PC-3 (cell line): ENCODE measurements at regions of chr1 and their contacts with region 1.

Region 1: DNA sequence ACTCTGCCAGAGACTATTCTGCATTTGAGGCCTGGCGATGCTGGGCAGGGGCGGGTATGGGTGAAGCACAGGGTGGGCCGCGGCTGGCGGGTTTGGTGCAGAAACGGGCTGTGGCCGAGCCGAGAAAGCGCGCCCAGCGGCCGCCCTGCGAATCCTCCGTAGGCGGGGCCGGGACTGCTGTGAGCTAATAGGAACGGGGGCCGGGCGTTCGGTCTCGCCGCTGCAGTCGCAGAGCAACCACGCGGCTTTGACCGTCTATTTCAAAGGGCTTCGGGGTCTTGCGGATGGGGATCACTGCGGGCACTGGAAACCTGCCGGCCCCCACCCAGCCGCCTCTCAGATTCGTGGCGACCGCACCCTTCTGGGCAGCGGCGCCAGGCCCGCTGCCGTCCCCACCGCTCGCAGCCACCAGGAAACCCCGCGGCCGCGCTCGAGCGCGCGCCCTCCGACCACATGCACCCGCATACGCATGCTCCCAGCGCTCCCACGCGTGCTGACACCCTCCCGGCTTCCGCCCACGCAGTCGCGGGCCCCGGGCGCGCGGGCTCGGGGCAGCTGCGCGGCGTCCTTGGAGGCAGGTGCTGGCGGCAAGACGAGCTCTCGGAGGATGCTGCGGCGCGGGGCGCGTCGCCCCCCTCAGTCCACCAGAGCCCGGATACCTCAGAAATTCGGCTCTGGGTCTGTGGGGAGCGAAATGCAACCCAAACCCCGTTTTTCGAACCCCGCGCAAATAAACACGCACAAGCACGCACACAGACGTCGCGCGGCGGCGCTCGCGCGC is 32.6 kb downstream of the DNTTIP2 start:
- DNase-seq: peak; percentile 80
- ATAC-seq: peak; percentile 52
- H3K4me3 ChIP-seq: peak overlapping the region; percentile 82
- H3K27ac ChIP-seq: peak overlapping the region; percentile 93
- H3K4me1 ChIP-seq: peaks cover 42% of the 10 kb centered on the region
- H3K27me3 ChIP-seq: no peaks in the 10 kb centered on the region
- CTCF ChIP-seq: peak; percentile 30; the same call in 1 of the 2 replicates

Region 2: GRCh38 chr1:93345633-93346420 is 500.6 kb before region 1 on chr1 and contains the start of gene DR1:
- CTCF ChIA-PET with region 1: no interaction called
- POLR2A ChIA-PET with region 1: interaction called, 3 read pairs
- intact Hi-C with region 1: loop called (anchors 10 kb)
- DNase-seq: peak; percentile 94
- ATAC-seq: peak; percentile 87
- H3K4me3 ChIP-seq: peak within 1 kb of the TSS; percentile 97
- H3K27ac ChIP-seq: peak within 1 kb of the TSS; percentile 91
- H3K4me1 ChIP-seq: peaks cover 12% of the 10 kb centered on the region; the same call in 1 of the 2 replicates
- H3K27me3 ChIP-seq: no peaks in the 10 kb centered on the region
- CTCF ChIP-seq: no peak
- total RNA-seq, gene DR1: 34.8 and 48.6 TPM in 2 replicates

Region 3: GRCh38 chr1:93447516-93448291 is 398.7 kb before region 1 on chr1 and contains the start of gene FNBP1L:
- CTCF ChIA-PET with region 1: no interaction called
- POLR2A ChIA-PET with region 1: interaction called, 18 read pairs
- intact Hi-C with region 1: loop called (anchors 2 kb)
- DNase-seq: peak; percentile 83
- ATAC-seq: peak; percentile 77
- H3K4me3 ChIP-seq: peak within 1 kb of the TSS; percentile 85
- H3K27ac ChIP-seq: peak within 1 kb of the TSS; percentile 29
- H3K4me1 ChIP-seq: peaks cover 26% of the 10 kb centered on the region
- H3K27me3 ChIP-seq: no peaks in the 10 kb centered on the region
- CTCF ChIP-seq: no peak
- total RNA-seq, gene FNBP1L: 27.6 and 28.3 TPM in 2 replicates

Region 4: DNA sequence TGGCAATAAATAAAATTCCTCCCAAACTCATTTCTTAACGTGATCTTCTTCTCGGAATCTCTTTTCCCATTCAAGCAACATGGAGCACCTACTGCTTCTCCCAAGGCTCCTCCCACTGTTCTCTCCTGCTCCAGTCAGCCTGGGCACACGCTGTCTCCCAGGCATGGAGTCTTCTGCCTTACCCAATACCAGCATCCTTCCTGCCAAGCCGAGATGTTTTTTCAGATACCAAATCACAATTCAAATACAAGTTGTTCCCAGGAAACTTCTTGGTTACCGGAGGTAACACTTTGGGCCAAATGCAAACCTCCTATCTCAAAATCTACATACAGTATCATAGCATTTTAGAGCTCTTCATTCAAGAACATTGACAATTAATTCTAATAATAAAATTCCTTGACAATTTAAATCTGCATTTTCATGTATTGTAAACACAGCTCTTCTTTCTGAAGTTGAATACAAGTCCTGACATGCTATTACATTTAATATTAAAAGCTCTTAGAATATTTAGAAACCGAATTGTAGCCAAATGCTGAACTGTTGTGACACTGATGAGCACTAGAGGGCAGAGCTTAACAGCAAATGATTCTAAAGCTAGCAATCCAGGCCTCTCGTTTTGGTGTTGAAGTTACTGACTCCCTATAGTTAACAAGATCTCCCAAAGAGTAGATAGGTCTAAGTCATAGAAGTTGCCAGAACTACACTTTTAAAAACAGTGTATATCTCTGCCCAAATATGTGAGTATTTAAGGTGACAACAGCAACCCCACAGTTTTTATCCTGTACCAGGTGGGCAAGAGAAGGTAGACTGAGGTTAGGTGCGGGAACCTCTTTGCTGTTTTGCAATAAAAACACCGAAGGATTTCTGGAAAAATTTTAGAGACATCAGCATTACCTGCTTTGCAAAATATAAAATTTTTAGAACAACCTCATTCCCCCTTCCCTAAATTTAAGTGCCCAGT is 217.0 kb before region 1 on chr1:
- CTCF ChIA-PET with region 1: interaction called, 6 read pairs
- POLR2A ChIA-PET with region 1: interaction called, 24 read pairs
- intact Hi-C with region 1: loop called (anchors 1 kb)
- DNase-seq: peak; percentile 85
- ATAC-seq: peak; percentile 64
- H3K4me3 ChIP-seq: no peak overlapping the region
- H3K27ac ChIP-seq: peak overlapping the region; percentile 72
- H3K4me1 ChIP-seq: peaks cover 75% of the 10 kb centered on the region
- H3K27me3 ChIP-seq: no peaks in the 10 kb centered on the region
- CTCF ChIP-seq: peak; percentile 88

Region 5: DNA sequence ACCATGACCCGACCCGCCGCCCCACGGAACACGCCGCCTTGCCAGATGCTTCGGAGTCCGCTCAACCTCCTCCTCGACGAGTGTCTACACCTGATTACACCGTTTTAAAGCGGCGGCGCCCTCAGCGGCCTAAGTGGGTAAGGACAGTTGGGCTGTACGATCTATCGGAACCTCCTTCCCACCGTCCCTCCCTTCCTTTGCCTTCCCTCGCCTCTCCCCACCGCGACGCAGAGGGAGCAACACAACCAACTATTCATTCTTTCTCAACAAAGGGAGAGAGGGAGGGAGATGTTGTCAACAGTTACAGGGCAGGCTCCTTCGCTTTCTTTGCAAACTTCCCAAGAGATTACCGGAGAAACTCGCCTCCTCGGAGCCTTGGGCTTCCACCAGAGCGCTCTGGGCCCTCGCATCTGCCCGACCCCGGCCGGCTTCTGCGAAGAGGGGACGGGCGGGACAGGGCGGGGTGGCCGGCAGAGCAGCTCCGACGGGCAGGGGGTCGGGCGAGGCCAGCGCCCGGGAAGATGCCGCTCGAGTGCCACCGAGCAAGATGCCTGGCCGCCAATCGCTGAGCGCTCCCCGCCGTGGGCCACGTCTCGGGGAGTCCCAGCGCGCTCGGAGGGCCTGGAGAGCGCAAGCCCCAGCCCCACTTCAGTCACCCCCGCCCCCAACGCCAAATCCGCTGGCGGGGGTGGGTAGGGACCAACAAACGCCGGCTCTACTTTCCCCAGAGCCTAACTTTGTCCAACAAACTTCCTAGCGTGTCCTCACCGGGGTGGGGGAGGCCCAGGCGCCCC is 165.4 kb before region 1 on chr1:
- CTCF ChIA-PET with region 1: no interaction called
- POLR2A ChIA-PET with region 1: interaction called, 5 read pairs
- intact Hi-C with region 1: loop called (anchors 2 kb)
- DNase-seq: peak; percentile 82
- ATAC-seq: peak; percentile 34
- H3K4me3 ChIP-seq: peak overlapping the region; percentile 95
- H3K27ac ChIP-seq: peak overlapping the region; percentile 99
- H3K4me1 ChIP-seq: peaks cover 78% of the 10 kb centered on the region
- H3K27me3 ChIP-seq: no peaks in the 10 kb centered on the region
- CTCF ChIP-seq: peak; percentile 61